Esophagus squamous epithelium (tissue), 5 donors: ENCODE measurements at regions of chr2 and their contacts with region 1.

Region 1: DNA sequence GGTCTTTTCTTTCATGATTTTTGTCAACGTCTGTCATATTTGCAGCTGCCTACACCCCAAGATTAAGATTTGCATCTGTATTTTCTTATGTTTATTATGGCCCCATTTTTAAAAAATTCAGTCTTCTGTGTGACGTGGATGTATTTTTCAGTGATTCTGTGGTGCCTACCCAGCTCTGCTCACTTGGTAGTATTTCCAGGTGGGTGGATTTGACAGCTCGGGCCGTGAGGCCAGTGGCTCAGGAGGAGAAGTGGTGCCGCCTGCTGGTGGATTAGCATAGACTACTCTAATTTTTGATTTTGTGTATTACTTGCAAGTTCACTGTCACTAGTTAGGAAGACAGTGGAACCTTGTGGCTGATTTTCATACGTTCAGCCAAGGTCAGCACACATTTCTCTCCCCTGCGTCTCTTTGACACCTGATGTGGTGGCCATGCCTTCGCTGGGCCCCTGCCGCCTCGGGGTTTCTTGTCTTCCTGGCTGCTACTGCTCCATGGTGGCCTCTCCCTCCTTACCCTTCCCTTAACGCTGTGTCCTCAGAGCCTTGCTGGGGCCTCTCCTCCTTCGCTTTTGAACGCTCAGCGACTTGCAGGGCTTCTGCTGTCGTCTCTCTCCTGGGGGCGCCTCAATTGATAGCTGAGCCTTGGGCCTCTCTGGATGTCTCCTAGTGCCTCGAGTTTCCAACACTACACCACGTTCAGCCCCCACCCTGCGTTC is 89.3 kb downstream of the DGKD start:
- DNase-seq: no peak
- H3K4me3 ChIP-seq: no peak overlapping the region
- H3K27ac ChIP-seq: no peak overlapping the region
- H3K4me1 ChIP-seq: peaks cover 0 to 12% (median 0%) of the 10 kb centered on the region in 3 donors
- H3K27me3 ChIP-seq: no peaks in the 10 kb centered on the region
- CTCF ChIP-seq: peak; percentile 69 to 92 (median 86)
- POLR2A ChIP-seq: no peak

Region 2: DNA sequence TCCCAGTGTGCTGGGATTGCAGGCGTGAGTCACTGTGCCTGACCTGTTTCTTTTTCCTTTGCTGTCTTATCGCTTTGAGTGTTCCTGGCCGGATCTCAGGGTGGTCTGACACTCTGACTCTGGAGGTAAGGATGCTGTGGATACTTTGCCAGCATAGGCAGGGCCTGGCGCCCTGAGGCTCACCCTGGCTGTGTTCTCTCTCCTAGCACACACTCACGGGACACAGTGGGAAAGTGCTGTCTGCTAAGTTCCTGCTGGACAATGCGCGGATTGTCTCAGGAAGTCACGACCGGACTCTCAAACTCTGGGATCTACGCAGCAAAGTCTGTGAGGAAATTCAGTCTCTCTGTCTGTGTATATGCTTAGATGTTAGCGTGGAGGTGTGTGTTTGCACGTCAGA is 154.0 kb before region 1 on chr2:
- intact Hi-C with region 1: loop called (anchors 10 kb)
- DNase-seq: no peak
- H3K4me3 ChIP-seq: no peak overlapping the region
- H3K27ac ChIP-seq: no peak overlapping the region
- H3K4me1 ChIP-seq: peaks cover 0 to 7% (median 0%) of the 10 kb centered on the region in 3 donors
- H3K27me3 ChIP-seq: no peaks in the 10 kb centered on the region
- CTCF ChIP-seq: no peak
- POLR2A ChIP-seq: no peak

Region 3: GRCh38 chr2:233353769-233354499 is 89.7 kb before region 1 on chr2 and contains the start of gene DGKD:
- intact Hi-C with region 1: loop called (anchors 10 kb)
- DNase-seq: no peak
- H3K4me3 ChIP-seq: peak within 1 kb of the TSS; percentile 45 to 79 (median 62)
- H3K27ac ChIP-seq: peak within 1 kb of the TSS; percentile 32 to 75 (median 57)
- H3K4me1 ChIP-seq: peaks cover 25 to 70% (median 33%) of the 10 kb centered on the region in 3 donors
- H3K27me3 ChIP-seq: peaks cover 0 to 46% (median 0%) of the 10 kb centered on the region in 4 donors
- CTCF ChIP-seq: peak; percentile 10 to 41 (median 26)
- POLR2A ChIP-seq: no peak
- total RNA-seq, gene DGKD: 2.3 to 10.9 (median 4.2) TPM

Region 4: DNA sequence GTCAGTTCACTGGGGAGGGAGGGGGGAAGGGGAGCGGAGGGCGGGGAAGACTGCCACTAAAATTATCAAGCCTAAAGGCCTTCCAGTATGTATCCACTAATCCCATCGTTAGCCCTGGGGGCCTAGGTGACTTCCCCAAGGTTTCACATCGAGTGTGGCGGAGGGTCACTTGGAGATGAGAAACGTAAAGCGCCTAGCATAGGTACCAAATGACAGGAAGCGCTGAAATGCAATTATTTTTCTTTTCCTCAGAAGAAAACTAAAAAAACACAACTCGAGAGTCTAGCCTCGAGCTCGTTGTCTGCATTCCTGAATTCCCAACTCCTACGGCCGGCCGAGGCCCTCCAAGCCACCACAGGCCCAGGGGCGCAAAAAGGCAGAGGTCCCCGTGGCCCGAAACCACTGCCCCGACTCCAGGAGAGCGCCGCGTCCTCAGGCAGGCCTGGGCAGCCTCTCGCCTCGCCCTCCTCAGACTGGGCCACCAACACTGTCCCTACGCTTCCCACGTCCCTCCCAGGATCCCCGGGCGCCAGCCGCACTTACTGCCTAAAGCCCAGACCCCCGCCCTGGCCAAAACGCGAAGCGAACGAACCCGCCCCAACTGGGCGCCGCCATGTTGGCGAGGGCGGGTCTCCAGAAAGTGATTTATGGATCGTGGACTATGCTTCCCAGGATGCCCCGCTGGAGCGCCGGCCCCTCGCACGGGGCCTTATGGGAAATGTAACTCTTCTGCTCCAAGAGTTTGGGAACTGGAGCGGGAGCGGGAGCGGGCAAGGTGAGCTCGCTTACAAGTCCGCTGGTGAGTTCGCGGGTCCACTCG is 122.7 kb after region 1 on chr2 and contains the start of gene USP40:
- intact Hi-C with region 1: no loop called
- DNase-seq: peak; percentile 33
- H3K4me3 ChIP-seq: peak within 1 kb of the TSS; percentile 64 to 96 (median 92)
- H3K27ac ChIP-seq: peak within 1 kb of the TSS; percentile 94 to 98 (median 96)
- H3K4me1 ChIP-seq: peaks cover 0 to 28% (median 11%) of the 10 kb centered on the region in 3 donors
- H3K27me3 ChIP-seq: no peaks in the 10 kb centered on the region
- CTCF ChIP-seq: peak in 3 of 6 experiments; percentile 5 to 9 (median 8)
- POLR2A ChIP-seq: peak in 3 of 4 donors; percentile 11 to 81 (median 74)
- total RNA-seq, gene USP40: 18.7 to 32.8 (median 23.0) TPM